ENCODE measurements at regions of chr5 and their contacts with region 1.

Region 1: DNA sequence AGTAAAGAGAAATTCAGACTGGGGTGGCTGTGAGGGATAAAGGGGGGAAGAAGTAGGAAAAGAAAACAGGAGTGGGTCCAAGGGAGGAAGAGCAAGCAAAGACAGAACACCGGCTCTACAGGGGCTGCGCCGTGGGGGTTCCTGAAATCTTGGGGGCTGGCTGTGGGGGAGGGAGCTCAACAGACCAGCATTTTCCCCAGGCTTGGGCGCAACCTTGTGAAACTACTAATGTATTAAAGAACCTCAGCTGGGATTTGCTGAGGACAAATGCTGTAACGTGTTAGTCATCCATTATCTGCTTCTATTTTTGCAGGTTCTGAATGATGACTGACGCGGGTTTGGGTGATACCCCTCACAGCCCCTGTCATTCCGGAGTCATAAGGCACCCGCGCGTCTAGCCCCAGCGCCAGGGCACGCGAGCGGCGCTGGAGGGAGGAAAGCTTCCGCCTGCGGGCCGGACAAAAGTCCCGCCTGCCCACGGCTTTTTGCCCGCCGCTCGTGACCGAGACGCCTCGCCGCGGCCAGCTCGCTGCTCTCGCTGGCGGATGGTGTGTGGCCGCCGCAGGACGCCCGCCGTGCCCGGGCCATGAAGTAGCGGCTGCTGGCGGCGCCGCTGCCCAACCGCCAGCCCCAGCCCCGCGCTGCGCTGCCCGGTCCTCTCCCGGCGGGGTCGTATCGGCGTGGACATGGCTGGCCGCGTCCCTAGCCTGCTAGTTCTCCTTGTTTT is 110.6 kb downstream of the PAM start:
- DNase-seq: peak; percentile 80
- H3K4me3 ChIP-seq: peak overlapping the region; percentile 55 to 88 (median 60)
- H3K27ac ChIP-seq: peak overlapping the region; percentile 72
- H3K4me1 ChIP-seq: peaks cover 34% of the 10 kb centered on the region
- H3K27me3 ChIP-seq: no peaks in the 10 kb centered on the region
- CTCF ChIP-seq: no peak
- POLR2A ChIP-seq: peak; percentile 50

Region 2: DNA sequence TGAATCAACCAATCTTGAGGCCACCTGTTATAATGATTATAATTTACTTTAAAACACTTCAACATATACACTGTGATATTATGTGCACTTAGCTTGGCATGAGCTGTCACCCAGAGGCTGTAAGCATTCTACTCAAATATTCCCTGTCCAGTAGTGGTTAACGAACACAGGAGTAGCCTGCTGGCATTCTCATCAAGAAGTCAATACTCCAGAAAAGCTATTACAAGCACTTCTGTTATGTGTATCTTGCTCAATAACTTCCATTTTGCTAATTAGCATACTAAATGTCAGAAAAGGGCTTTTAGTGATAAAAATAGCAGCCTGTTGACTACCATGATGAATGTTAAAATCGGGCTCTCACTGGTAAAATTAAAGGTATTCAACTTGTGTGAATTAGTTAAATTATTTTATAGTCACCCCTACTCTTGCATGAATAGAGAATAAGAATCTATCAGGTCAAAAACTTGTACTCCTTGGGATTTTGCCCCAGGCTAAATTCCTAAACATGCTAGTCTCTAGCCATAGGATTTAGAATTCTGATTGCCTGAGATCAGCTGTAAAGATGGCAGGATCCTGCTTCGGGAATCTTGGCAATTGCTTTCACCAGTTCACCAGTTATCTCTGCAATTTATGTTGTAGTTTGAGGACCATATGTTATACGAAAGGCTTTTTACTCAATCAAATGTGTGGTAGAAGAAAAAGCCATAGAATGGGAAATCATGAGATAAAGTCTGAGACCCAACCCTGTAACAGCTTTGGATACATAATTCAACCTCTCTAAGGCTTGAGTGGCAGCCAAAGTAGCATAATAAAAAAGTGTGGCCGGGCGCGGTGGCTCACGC is 153.9 kb before region 1 on chr5:
- CTCF ChIA-PET with region 1: no interaction called
- POLR2A ChIA-PET with region 1: no interaction called
- dilution Hi-C with region 1: no loop called
- intact Hi-C with region 1: no loop called
- DNase-seq: no peak
- H3K4me3 ChIP-seq: no peak overlapping the region
- H3K27ac ChIP-seq: no peak overlapping the region
- H3K4me1 ChIP-seq: peaks cover 7% of the 10 kb centered on the region
- H3K27me3 ChIP-seq: no peaks in the 10 kb centered on the region
- CTCF ChIP-seq: no peak
- POLR2A ChIP-seq: no peak

Region 3: DNA sequence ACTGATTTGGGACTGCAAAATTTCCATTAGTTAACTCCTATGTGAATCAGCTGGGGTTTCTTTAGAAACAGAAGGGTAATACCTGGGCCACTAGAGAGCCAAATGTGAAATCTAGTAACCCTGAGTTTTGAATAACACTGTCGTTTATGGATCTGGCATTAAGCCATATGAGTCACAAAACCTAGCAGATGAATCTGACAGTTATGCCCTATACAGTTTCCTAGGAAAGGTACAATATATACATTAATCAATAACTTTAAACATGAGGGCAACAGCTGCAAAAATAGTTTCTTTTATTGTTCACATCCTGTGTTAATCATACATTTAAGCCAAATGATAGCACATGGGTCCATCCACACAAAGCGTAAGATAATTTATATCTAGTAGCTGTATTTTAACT is 53.7 kb before region 1 on chr5:
- CTCF ChIA-PET with region 1: interaction called, 8 read pairs
- POLR2A ChIA-PET with region 1: no interaction called
- dilution Hi-C with region 1: no loop called
- intact Hi-C with region 1: loop called (anchors 2 kb)
- DNase-seq: peak; percentile 85
- H3K4me3 ChIP-seq: no peak overlapping the region
- H3K27ac ChIP-seq: peak overlapping the region; percentile 19
- H3K4me1 ChIP-seq: peaks cover 31% of the 10 kb centered on the region
- H3K27me3 ChIP-seq: no peaks in the 10 kb centered on the region
- CTCF ChIP-seq: no peak
- POLR2A ChIP-seq: no peak

Region 4: GRCh38 chr5:102853680-102854079 is 12.0 kb before region 1 on chr5:
- CTCF ChIA-PET with region 1: interaction called, 8 read pairs
- POLR2A ChIA-PET with region 1: interaction called, 4 read pairs
- dilution Hi-C with region 1: no loop called
- intact Hi-C with region 1: loop called (anchors 1 kb)
- DNase-seq: peak; percentile 36
- H3K4me3 ChIP-seq: no peak overlapping the region
- H3K27ac ChIP-seq: no peak overlapping the region
- H3K4me1 ChIP-seq: peaks cover 9% of the 10 kb centered on the region
- H3K27me3 ChIP-seq: no peaks in the 10 kb centered on the region
- CTCF ChIP-seq: no peak
- POLR2A ChIP-seq: no peak

Region 5: GRCh38 chr5:102959055-102959454 is 93.4 kb after region 1 on chr5:
- CTCF ChIA-PET with region 1: no interaction called
- POLR2A ChIA-PET with region 1: no interaction called
- dilution Hi-C with region 1: no loop called
- intact Hi-C with region 1: loop called (anchors 1 kb)
- DNase-seq: peak; percentile 91
- H3K4me3 ChIP-seq: peak overlapping the region in 1 of 3 experiments; percentile 18
- H3K27ac ChIP-seq: peak overlapping the region; percentile 97
- H3K4me1 ChIP-seq: peaks cover 24% of the 10 kb centered on the region
- H3K27me3 ChIP-seq: no peaks in the 10 kb centered on the region
- CTCF ChIP-seq: no peak
- POLR2A ChIP-seq: no peak

Region 6: DNA sequence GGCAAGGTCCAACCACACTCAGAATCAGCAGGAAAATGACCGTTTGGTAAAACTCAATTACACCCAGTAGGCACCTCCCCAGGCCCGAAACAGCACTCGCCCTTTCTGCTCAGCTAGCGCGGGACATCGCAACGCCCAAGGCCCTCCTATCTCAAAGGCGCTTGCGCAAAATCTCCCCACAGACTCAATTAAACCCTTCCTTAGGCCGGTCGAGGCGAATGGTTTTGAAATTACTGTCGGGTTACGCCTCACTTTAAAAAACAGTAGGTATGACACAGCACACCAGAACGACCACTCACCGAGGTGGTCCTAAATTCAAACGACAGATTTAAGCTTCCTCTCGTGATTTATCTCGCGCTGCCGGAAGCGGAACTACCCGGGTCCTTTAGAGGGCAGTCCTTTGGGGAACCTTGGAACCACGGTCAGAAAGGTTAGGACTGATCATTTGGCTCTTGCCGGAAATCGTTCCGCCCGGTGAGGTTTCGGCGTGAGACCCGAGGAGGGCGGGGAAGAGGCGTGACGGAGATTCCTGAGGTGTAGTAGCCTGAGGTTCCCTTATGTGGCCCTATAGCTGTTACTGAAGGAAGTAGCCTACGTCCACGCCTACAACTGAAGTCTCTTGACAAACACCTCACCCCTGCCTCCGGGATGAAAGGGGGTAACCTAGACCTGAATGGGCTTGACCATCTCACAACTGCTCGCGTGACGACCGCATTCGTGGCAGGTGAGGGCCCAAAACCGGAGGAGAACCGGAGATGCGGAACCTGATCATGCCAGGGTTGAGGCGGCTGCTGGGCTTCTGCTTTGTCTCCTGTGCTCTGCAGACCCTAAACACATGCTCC is 254.3 kb after region 1 on chr5 and contains the starts of genes GIN1 and PPIP5K2:
- CTCF ChIA-PET with region 1: no interaction called
- POLR2A ChIA-PET with region 1: interaction called, 5 read pairs
- dilution Hi-C with region 1: no loop called
- intact Hi-C with region 1: loop called (anchors 5 kb)
- DNase-seq: peak; percentile 99
- H3K4me3 ChIP-seq: peak within 1 kb of the TSS; percentile 63 to 92 (median 92)
- H3K27ac ChIP-seq: peak within 1 kb of the TSS; percentile 93
- H3K4me1 ChIP-seq: peaks cover 19% of the 10 kb centered on the region
- H3K27me3 ChIP-seq: no peaks in the 10 kb centered on the region
- CTCF ChIP-seq: no peak
- POLR2A ChIP-seq: peak; percentile 50
- total RNA-seq, gene GIN1: 4.4 and 6.7 TPM in 2 replicates
- total RNA-seq, gene PPIP5K2: 53.5 and 69.4 TPM in 2 replicates

Measured in endothelial cell of umbilical vein (primary cell).